ENCODE measurements at regions of chr14 and their contacts with region 1.

Region 1: DNA sequence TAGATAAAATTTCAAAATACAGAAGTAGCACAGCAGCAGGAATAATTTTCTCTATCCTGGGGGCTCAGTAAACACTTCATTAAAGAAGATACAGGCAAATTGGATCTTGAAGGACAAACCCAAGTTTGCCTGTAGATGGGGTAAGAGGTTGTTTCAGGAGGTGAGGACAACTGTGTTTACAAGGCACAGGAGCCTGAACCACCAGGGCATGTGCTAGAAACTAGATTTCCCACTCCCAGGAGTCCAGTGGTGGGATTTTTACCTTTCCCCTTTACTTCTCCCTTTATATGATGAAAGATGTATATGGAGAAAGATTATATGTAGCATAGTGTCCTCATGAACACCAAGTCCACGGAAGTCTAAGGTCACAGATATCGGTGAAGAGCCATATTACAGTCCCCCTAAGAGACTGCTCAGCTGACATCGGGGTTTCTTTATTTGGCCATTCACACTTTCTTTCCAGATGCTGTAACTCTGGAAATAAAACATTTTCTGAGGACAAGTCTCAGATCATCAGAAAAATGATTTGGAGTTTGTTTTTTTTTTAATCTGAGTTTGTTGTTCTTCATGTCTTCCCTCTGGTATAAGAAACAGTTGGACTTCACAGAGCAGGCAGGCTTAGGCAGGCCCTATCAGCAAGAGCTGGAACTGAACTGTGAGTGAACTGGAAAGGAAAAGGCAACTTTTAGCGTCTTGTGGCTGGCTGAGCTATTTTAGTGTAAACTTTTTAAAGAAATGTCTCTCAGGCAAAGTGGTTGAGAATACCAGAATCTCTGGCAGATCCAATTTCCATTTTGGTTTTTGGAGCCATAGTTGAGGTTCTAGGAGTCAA is 8.0 kb upstream of the EVL start:
- DNase-seq: no peak
- H3K4me3 ChIP-seq: no peak overlapping the region
- CTCF ChIP-seq: peak; percentile 26

Region 2: GRCh38 chr14:99884834-99885648 is 172.1 kb before region 1 on chr14:
- in situ Hi-C with region 1: no loop called
- DNase-seq: peak; percentile 64
- H3K4me3 ChIP-seq: no peak overlapping the region
- CTCF ChIP-seq: peak; percentile 51

Region 3: DNA sequence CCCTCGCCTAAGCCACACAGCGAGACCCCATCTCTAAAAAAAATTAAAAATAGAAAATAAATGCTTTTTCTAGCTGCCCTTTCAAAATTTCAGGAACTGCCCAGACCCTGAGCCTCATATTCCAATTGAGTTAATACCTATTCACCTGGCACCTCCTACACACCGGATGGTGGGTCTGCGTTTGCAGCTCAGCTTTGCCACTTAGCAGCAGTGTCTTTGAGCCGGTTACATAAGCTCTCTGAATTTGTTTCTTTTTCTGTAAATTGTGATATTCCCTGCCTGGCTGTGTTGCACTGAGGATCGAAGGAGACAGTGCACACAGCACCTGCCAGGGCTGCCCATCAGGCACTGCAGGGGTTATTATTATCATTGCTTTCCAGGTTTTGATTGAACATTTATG is 138.4 kb before region 1 on chr14:
- in situ Hi-C with region 1: no loop called
- DNase-seq: no peak
- H3K4me3 ChIP-seq: no peak overlapping the region
- CTCF ChIP-seq: no peak

Region 4: GRCh38 chr14:100104523-100105300 is 47.5 kb after region 1 on chr14:
- in situ Hi-C with region 1: loop called (anchors 5 kb)
- DNase-seq: peak; percentile 13
- H3K4me3 ChIP-seq: no peak overlapping the region
- CTCF ChIP-seq: no peak